Psoas muscle (tissue), 8 donors: ENCODE measurements at regions of chr17 and their contacts with region 1.

Region 1: DNA sequence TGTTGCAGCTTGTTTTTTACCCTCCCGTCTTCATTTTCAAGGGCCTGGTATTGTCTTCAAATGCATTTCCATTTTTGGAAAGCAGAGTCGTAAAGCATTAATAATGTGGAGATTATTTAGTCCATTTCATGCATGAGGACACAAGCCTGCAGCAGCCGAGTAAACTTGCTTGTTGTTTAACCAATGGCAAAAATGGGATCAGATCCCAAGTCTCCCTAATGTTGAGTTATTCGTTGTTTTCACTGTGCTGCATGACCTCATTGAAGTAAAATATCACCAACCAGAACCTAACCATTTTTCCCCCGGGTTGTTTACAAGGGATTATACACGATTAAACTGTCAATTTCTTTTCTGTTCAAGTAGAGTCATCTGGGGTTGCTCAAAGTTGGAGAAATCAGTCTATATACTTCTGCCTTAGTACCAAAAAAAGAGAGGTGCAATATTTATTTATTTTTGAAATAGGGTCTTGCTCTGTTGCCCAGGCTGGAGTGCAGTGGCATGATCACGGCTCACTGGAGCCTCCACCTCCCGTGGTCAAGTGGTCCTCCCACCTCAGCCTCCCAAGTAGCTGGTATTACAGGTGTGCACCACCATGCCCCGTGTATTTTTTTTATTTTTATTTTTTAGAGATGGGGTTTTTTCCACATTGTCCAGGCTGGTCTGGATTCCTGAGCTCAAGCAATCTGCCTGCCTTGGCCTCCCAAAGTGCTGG is 12.4 kb downstream of the AMZ2 start:
- DNase-seq: no peak
- ATAC-seq: no peak
- H3K4me3 ChIP-seq: no peak overlapping the region
- H3K27ac ChIP-seq: peak overlapping the region; percentile 89
- H3K4me1 ChIP-seq: peaks cover 6% of the 10 kb centered on the region
- H3K27me3 ChIP-seq: no peaks in the 10 kb centered on the region
- CTCF ChIP-seq: no peak

Region 2: DNA sequence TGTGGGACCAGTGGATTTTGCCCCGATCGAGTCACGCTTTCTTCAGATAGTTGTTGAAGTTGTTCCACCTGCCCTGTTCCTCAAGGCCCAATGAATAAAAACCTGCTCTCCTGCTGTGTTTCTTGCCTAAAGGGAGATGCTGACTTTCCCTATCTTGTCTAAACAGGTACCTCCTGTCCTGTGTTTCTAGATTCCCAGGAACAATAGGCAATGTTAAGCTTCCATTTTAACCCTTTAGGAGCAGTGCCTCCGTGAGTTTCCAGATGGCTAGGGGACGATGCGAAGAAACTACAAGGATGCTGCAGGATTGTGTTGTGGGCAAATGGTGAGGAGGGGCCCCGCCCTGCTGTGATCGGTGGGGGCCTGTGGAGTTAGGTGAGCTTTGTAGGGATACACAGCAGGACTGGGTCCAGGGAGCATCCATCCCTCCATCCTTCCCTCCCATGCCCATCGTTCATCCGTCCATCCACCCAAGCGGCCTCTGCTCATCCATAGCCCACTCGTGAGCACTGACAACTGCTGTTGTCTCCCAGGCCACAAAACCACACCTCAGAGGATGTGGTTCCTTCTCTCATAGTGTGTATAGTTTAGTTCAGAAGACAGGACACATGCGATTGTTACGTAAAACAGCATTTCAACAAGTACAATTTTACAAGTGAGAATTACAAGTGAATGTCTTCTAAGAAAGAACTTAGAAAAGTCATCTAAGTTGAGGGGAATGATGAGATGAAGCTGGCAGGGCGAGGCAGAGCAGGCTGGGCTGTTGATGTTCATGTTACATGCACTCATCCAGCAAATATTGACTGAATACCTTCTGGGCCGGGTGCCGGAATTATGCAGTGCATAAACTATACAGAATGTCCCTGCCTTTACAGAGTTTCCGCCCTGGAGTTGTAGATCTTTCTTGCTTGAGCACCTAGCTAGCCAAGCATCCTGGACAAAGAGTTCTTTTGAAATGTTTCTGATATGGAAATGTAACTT is 36.3 kb after region 1 on chr17:
- intact Hi-C with region 1: no loop called
- DNase-seq: peak in 1 of 2 donors; percentile 73
- ATAC-seq: peak in 3 of 4 donors; percentile 47 to 81 (median 63)
- H3K4me3 ChIP-seq: no peak overlapping the region
- H3K27ac ChIP-seq: peak overlapping the region; percentile 65
- H3K4me1 ChIP-seq: peaks cover 23% of the 10 kb centered on the region
- H3K27me3 ChIP-seq: no peaks in the 10 kb centered on the region
- CTCF ChIP-seq: no peak

Region 3: GRCh38 chr17:68398691-68399637 is 138.8 kb after region 1 on chr17:
- intact Hi-C with region 1: loop called (anchors 2 to 5 kb)
- DNase-seq: peak; percentile 53 to 75
- ATAC-seq: peak; percentile 76 to 90 (median 84)
- H3K4me3 ChIP-seq: no peak overlapping the region
- H3K27ac ChIP-seq: no peak overlapping the region
- H3K4me1 ChIP-seq: peaks cover 17% of the 10 kb centered on the region
- H3K27me3 ChIP-seq: no peaks in the 10 kb centered on the region
- CTCF ChIP-seq: peak; percentile 76

Region 4: GRCh38 chr17:68435876-68436842 is 176.0 kb after region 1 on chr17:
- intact Hi-C with region 1: loop called (anchors 2 to 10 kb)
- DNase-seq: peak; percentile 79 to 87
- ATAC-seq: peak; percentile 81 to 85 (median 83)
- H3K4me3 ChIP-seq: peak overlapping the region; percentile 7
- H3K27ac ChIP-seq: peak overlapping the region; percentile 87
- H3K4me1 ChIP-seq: peaks cover 47% of the 10 kb centered on the region
- H3K27me3 ChIP-seq: no peaks in the 10 kb centered on the region
- CTCF ChIP-seq: peak; percentile 90

Region 5: DNA sequence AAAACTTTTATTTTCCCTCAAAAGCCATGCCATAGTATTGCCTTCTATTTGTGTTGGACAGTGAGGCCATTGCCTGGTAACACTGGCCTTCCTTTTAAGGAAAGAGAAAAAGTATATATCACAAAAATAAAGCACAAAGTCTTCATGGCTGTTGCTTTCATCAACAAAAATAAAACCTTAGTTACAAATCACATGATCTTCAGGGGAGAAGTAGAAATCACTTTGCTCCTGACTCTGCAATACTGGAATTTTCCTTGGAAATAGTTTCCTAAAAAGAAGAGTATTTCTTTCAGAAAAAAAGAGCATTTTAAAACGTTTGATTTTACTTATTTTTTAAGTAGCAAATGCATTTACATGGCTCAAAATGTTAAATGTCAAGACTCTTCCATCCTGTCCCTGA is 299.1 kb after region 1 on chr17:
- intact Hi-C with region 1: no loop called
- DNase-seq: no peak
- ATAC-seq: no peak
- H3K4me3 ChIP-seq: no peak overlapping the region
- H3K27ac ChIP-seq: no peak overlapping the region
- H3K4me1 ChIP-seq: no peaks in the 10 kb centered on the region
- H3K27me3 ChIP-seq: no peaks in the 10 kb centered on the region
- CTCF ChIP-seq: no peak